Cardiac septum (tissue), 1 donor: ENCODE measurements at regions of chr3 and their contacts with region 1.

Region 1: GRCh38 chr3:132029182-132029902 is 5.5 kb downstream of the CPNE4 start:
- DNase-seq: peak; percentile 84

Region 2: DNA sequence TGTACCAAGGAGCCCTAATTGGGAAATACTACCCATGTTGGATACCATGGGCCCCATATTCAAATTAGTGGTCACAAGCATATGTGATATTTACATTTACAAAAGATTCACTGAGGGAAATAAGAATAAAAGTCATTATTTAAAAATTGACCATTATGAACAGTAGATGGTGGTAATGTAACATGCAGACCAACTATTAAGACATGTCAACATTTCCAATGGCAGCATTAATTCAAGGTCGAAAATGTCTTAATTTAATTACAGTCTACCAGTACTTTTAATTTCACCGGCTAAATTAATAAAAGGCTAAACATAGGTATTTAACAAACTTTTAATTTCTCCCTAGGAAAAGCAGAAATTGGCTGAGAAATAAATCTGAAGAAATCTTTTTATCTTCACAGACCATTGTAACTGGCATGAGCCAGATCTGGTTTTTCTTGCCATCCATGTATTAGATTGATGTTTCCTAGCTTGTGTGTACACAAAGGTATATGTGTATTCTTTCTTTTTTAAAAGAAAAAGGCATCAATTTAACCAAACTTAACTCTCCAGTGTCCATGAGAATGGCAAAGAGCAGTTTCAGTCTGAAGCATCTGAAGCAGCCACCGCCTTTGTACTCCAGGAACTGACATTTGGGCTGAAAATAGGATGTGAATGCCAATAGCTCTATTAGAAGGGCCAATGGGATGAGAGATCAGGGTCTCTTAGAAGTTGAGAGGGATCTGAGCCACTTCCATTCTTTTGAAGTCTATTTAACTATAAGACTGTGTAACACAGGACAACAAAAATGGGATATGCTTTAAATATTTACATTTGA is 976.1 kb before region 1 on chr3:
- intact Hi-C with region 1: loop called (anchors 10 kb)
- DNase-seq: no peak

Region 3: GRCh38 chr3:131543714-131544113 is 485.6 kb before region 1 on chr3:
- intact Hi-C with region 1: loop called (anchors 10 kb)
- DNase-seq: peak; percentile 83

Region 4: GRCh38 chr3:132606085-132606484 is 576.7 kb after region 1 on chr3:
- intact Hi-C with region 1: no loop called
- DNase-seq: no peak